SK-N-SH (cell line): ENCODE measurements at regions of chr7 and their contacts with region 1.

Region 1: DNA sequence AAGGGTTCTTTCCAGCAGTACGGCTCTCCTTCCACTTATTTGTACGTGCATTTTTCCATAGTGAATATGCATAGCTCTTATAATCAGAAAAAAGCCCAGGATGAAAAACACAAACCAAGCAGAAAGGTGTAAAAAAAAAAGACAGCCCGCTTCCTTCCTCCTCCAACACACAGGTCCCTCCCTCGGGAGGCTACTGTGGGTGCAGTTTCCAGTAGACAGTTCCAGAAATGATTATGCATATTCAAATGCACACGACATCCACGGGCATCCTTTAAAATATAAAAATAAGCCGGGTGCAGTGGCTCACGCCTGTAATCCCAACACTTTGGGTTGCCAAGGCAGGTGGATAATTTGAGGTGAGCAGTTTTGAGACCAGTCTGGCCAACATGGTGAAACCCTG is 59.9 kb downstream of the TNRC18 start:
- DNase-seq: no peak
- H3K4me3 ChIP-seq: no peak overlapping the region
- H3K27ac ChIP-seq: no peak overlapping the region
- H3K4me1 ChIP-seq: no peaks in the 10 kb centered on the region
- H3K27me3 ChIP-seq: no peaks in the 10 kb centered on the region
- CTCF ChIP-seq: no peak
- EP300 ChIP-seq: no peak
- RAD21 ChIP-seq: no peak

Region 2: DNA sequence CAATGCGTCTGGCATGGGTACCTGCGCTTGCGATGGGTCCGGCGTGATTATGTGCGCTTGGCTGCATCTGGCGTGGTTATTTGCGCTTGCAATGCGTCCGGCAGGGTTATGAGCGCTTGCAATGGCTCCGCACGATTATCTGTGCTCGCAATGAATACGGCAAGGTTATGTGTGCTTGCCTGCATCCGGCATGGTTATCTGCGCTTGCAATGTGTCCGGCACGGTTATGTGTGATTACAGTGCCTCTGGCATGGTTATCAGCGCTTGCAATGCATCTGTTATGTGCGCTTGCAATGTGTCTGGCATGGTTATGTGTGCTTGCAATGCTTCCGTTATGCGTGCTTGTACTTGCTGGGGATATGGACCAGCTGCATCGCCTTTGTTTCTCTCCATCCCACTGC is 280.4 kb before region 1 on chr7:
- CTCF ChIA-PET with region 1: no interaction called
- POLR2A ChIA-PET with region 1: no interaction called
- DNase-seq: peak; percentile 63
- H3K4me3 ChIP-seq: peak overlapping the region; percentile 9 to 35; a peak in 2 of 4 replicates
- H3K27ac ChIP-seq: no peak overlapping the region
- H3K4me1 ChIP-seq: peaks cover 0 to 10% of the 10 kb centered on the region in 2 experiments; a peak in 1 of 4 replicates
- H3K27me3 ChIP-seq: peaks cover 36% of the 10 kb centered on the region
- CTCF ChIP-seq: no peak
- EP300 ChIP-seq: no peak
- RAD21 ChIP-seq: peak; percentile 2; the same call in 1 of the 2 replicates

Region 3: GRCh38 chr7:5375925-5376324 is 12.2 kb after region 1 on chr7:
- CTCF ChIA-PET with region 1: interaction called, 40 read pairs
- POLR2A ChIA-PET with region 1: no interaction called
- DNase-seq: no peak
- H3K4me3 ChIP-seq: no peak overlapping the region
- H3K27ac ChIP-seq: no peak overlapping the region
- H3K4me1 ChIP-seq: no peaks in the 10 kb centered on the region
- H3K27me3 ChIP-seq: no peaks in the 10 kb centered on the region
- CTCF ChIP-seq: no peak
- EP300 ChIP-seq: no peak
- RAD21 ChIP-seq: no peak

Region 4: DNA sequence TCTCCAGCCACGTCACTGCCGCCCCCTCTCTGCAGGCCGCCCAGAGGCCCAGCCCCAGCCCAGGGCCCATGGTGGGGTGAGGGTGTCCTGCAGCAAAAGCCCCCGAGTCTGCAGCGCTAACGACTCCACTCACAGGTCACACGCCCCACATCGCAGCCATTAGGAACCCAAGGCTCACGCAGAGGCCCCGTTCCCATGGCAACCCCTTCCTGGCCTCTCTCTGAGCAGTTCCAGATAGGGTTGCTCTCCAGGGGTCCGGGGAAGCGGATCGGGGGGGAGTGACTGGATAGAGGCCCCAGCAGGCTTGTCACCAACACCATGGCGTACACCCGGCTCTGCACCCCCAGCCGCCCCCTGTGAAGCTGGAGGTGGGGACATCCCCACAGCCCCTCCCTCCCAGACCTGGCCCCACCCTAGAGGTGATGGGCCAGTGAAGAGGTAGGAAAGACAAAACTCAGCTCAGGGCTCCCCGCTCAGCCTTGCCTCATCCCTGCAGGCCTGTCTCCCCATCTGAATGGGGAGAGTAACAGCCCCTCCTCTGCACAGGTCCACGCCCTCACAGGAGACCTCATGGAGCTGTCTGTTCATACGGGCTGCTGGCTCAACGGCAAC is 18.7 kb after region 1 on chr7:
- CTCF ChIA-PET with region 1: interaction called, 40 read pairs
- POLR2A ChIA-PET with region 1: no interaction called
- DNase-seq: peak; percentile 97
- H3K4me3 ChIP-seq: no peak overlapping the region; a peak in 1 of 4 replicates
- H3K27ac ChIP-seq: peak overlapping the region in 1 of 2 experiments; percentile 5; a peak in 1 of 4 replicates
- H3K4me1 ChIP-seq: peaks cover 11 to 13% of the 10 kb centered on the region in 2 experiments; a peak in 2 of 4 replicates
- H3K27me3 ChIP-seq: no peaks in the 10 kb centered on the region
- CTCF ChIP-seq: no peak
- EP300 ChIP-seq: no peak
- RAD21 ChIP-seq: no peak

Region 5: GRCh38 chr7:5437987-5438386 is 74.3 kb after region 1 on chr7:
- CTCF ChIA-PET with region 1: interaction called, 11 read pairs
- POLR2A ChIA-PET with region 1: no interaction called
- DNase-seq: no peak
- H3K4me3 ChIP-seq: no peak overlapping the region
- H3K27ac ChIP-seq: no peak overlapping the region
- H3K4me1 ChIP-seq: no peaks in the 10 kb centered on the region
- H3K27me3 ChIP-seq: no peaks in the 10 kb centered on the region
- CTCF ChIP-seq: no peak
- EP300 ChIP-seq: no peak
- RAD21 ChIP-seq: no peak

Region 6: DNA sequence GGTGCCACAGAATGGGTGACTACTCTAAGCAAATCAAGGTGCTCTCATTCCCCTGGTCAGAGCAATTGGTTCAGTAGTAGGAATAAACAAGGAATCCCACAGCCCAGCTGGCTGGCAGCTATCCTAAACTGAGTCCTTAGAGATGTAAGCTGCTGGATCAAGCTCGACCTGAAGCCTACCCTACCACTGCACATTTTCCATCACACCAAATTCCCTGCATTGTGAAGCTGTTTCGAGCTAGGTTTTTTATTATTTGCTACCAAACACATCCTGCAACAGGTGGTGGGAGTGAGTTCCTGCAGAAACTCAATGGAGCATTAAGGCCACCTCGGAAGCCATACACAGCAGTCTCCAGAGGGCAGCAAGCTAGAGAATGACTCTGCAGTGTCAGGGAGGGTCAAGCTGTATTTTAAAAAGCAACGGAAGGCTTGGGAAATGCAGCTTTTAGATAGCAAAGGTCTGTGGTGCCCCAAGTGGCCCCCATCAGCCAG is 93.6 kb after region 1 on chr7:
- CTCF ChIA-PET with region 1: interaction called, 150 read pairs
- POLR2A ChIA-PET with region 1: no interaction called
- DNase-seq: no peak
- H3K4me3 ChIP-seq: no peak overlapping the region
- H3K27ac ChIP-seq: no peak overlapping the region
- H3K4me1 ChIP-seq: no peaks in the 10 kb centered on the region; a peak in 1 of 4 replicates
- H3K27me3 ChIP-seq: no peaks in the 10 kb centered on the region
- CTCF ChIP-seq: no peak
- EP300 ChIP-seq: no peak
- RAD21 ChIP-seq: no peak

Region 7: GRCh38 chr7:5477723-5478531 is 114.2 kb after region 1 on chr7:
- CTCF ChIA-PET with region 1: interaction called, 30 read pairs
- POLR2A ChIA-PET with region 1: no interaction called
- DNase-seq: peak; percentile 88
- H3K4me3 ChIP-seq: no peak overlapping the region
- H3K27ac ChIP-seq: peak overlapping the region in 1 of 2 experiments; percentile 64; a peak in 1 of 4 replicates
- H3K4me1 ChIP-seq: peaks cover 0 to 26% of the 10 kb centered on the region in 2 experiments; a peak in 1 of 4 replicates
- H3K27me3 ChIP-seq: no peaks in the 10 kb centered on the region
- CTCF ChIP-seq: peak; percentile 15; the same call in 1 of the 2 replicates
- EP300 ChIP-seq: no peak
- RAD21 ChIP-seq: peak; percentile 9; the same call in 1 of the 2 replicates